K562 (cell line): ENCODE measurements at regions of chr1 and their contacts with region 1.

Region 1: GRCh38 chr1:205199090-205199930 is 12.2 kb downstream of the DSTYK start:
- DNase-seq: peak in 2 of 4 experiments; percentile 46 to 66
- ATAC-seq: peak; percentile 88
- H3K4me3 ChIP-seq: no peak overlapping the region
- H3K27ac ChIP-seq: no peak overlapping the region
- H3K4me1 ChIP-seq: peaks cover 0 to 14% of the 10 kb centered on the region in 2 experiments; a peak in 4 of 5 replicates
- H3K27me3 ChIP-seq: no peaks in the 10 kb centered on the region
- CTCF ChIP-seq: peak; percentile 14 to 55 (median 23); a peak in 3 of 6 replicates
- EP300 ChIP-seq: no peak
- POLR2A ChIP-seq: no peak
- RAD21 ChIP-seq: peak; percentile 57 to 75

Region 2: GRCh38 chr1:204685236-204686006 is 513.9 kb before region 1 on chr1 and contains the start of gene LRRN2:
- CTCF ChIA-PET with region 1: no interaction called
- POLR2A ChIA-PET with region 1: no interaction called
- in situ Hi-C with region 1: no loop called
- intact Hi-C with region 1: no loop called
- DNase-seq: no peak
- ATAC-seq: no peak
- H3K4me3 ChIP-seq: no peak within 1 kb of the TSS
- H3K27ac ChIP-seq: no peak within 1 kb of the TSS
- H3K4me1 ChIP-seq: peaks cover 8 to 16% of the 10 kb centered on the region in 2 experiments; a peak in 4 of 5 replicates
- H3K27me3 ChIP-seq: no peaks in the 10 kb centered on the region
- CTCF ChIP-seq: no peak
- EP300 ChIP-seq: no peak
- POLR2A ChIP-seq: no peak
- RAD21 ChIP-seq: no peak
- polyA plus RNA-seq, gene LRRN2: not detected

Region 3: DNA sequence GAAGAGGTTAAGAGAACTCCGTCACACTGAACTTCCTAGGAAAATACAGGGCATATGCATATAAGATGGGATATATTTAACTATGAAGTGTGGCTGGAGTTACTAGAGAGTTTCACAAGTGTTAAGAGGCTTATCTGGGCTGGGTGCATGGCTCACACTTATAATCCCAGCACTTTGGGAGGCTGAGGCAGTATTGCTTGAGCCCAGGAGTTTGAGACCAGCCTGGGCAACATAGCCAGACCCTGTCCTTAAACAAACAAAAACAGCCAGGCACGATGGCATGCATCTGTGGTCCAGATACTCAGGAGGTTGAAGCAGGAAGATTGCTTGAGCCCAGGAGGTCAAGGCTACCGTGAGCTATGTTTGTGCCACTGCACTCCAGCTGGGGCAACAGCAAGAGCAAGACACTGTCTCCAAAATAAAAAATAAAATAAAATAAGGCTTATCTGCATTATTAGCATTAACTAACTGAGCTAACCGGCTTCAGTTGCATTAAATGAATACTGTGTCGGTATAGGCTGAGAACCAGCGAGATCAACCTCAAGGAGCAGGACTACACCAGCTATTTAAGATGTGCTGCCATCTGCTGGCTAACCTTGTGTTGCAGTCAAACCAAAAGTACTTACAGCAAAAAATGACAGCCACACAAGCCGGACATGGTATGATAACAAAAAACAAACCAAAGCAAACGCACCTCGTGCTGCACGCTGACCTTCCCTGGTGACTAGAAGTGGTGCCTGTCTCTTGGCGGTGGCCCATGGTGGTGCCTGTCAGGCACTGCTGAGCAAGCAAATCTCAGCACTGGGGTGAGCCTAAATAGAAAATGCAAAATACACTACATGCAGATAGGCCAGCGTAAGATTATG is 57.8 kb before region 1 on chr1:
- CTCF ChIA-PET with region 1: no interaction called
- POLR2A ChIA-PET with region 1: no interaction called
- in situ Hi-C with region 1: no loop called
- intact Hi-C with region 1: loop called (anchors 5 kb)
- DNase-seq: peak; percentile 77 to 91 (median 79)
- ATAC-seq: peak; percentile 94
- H3K4me3 ChIP-seq: no peak overlapping the region
- H3K27ac ChIP-seq: no peak overlapping the region
- H3K4me1 ChIP-seq: peaks cover 3 to 7% of the 10 kb centered on the region in 2 experiments; a peak in 3 of 5 replicates
- H3K27me3 ChIP-seq: no peaks in the 10 kb centered on the region
- CTCF ChIP-seq: peak; percentile 87 to 92 (median 92)
- EP300 ChIP-seq: no peak
- POLR2A ChIP-seq: no peak
- RAD21 ChIP-seq: peak; percentile 65 to 83

Region 4: DNA sequence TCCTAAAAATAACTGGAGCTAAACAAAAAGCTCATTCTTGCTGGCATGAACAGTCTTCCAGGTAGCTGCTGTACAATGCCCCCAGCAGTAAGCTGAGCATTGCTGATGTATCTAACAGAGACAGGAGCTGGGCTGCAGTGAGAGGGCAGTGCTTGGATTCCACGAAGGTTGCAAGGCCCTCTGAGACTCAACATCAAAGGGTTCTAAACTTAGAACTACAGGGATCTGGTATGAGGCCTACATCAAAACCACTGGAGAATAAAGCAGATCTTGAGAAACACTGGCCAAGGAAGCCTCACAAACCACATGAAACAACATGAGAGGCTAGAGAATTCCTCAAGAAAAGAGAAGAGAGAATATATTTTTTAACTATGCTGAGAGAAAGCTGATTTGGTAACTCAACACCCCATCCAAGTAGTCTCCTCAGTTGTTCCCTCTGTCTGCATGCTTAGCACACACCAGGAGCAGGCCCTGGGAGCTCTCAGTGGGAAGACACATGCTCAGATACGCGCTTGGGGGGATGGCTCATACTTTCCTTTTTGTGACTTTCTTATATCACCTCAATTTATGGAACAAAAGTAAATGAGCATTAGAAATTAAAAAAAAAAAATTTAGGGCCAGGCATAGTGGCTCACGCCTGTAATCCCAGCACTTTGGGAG is 15.5 kb before region 1 on chr1:
- CTCF ChIA-PET with region 1: no interaction called
- POLR2A ChIA-PET with region 1: interaction called, 13 read pairs
- in situ Hi-C with region 1: no loop called
- intact Hi-C with region 1: no loop called
- DNase-seq: no peak
- ATAC-seq: peak; percentile 32; the same call in 2 of the 3 replicates
- H3K4me3 ChIP-seq: no peak overlapping the region
- H3K27ac ChIP-seq: no peak overlapping the region; the same call in 2 of the 3 replicates
- H3K4me1 ChIP-seq: peaks cover 0 to 14% of the 10 kb centered on the region in 2 experiments; a peak in 2 of 5 replicates
- H3K27me3 ChIP-seq: no peaks in the 10 kb centered on the region
- CTCF ChIP-seq: no peak
- EP300 ChIP-seq: no peak
- POLR2A ChIP-seq: no peak
- RAD21 ChIP-seq: no peak

Region 5: DNA sequence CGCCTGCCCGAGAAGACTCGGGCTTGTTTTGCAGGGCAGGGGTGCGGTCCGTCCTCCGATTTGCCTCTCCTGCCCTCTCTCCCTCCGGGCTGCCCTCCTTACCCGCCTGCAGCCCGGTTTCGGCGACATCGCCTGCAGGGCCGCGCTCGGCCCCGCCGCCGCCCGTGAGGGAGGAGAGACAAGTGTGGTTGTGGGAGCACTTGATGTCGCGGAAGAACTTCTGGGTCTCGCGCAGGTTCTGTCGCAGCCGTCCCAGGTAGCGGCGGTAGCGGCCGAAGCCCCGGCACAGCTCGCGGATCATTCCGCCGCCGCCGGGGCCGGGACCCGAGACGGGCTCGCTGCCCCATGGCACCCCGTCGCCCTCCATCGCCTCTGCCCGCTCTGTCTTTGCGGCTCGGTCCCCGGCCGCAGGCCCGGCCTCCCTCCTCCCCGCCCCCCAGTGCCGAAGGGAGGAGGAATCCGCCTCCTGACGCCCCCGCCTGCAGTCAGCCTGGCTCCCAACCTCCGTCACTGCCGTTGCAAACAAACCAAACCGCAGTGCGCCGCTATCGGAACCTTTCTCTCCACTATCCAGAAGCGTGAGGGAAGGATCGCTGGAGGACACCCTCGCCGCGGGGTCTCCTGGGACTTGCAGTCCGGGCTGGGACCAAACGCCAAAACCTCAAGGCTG is 12.0 kb after region 1 on chr1 and contains the start of gene DSTYK:
- CTCF ChIA-PET with region 1: no interaction called
- POLR2A ChIA-PET with region 1: interaction called, 28 read pairs
- in situ Hi-C with region 1: no loop called
- intact Hi-C with region 1: no loop called
- DNase-seq: peak; percentile 95 to 99 (median 96)
- ATAC-seq: peak; percentile 95
- H3K4me3 ChIP-seq: peak within 1 kb of the TSS; percentile 85
- H3K27ac ChIP-seq: peak within 1 kb of the TSS; percentile 66
- H3K4me1 ChIP-seq: peaks cover 16 to 44% of the 10 kb centered on the region in 2 experiments
- H3K27me3 ChIP-seq: no peaks in the 10 kb centered on the region
- CTCF ChIP-seq: no peak
- EP300 ChIP-seq: peak; percentile 84
- POLR2A ChIP-seq: peak; percentile 90
- RAD21 ChIP-seq: no peak; a peak in 1 of 4 replicates
- polyA plus RNA-seq, gene DSTYK: 4.6 to 5.0 TPM